Cardiac septum (tissue), 1 donor: ENCODE measurements at regions of chr15 and their contacts with region 1.

Region 1: DNA sequence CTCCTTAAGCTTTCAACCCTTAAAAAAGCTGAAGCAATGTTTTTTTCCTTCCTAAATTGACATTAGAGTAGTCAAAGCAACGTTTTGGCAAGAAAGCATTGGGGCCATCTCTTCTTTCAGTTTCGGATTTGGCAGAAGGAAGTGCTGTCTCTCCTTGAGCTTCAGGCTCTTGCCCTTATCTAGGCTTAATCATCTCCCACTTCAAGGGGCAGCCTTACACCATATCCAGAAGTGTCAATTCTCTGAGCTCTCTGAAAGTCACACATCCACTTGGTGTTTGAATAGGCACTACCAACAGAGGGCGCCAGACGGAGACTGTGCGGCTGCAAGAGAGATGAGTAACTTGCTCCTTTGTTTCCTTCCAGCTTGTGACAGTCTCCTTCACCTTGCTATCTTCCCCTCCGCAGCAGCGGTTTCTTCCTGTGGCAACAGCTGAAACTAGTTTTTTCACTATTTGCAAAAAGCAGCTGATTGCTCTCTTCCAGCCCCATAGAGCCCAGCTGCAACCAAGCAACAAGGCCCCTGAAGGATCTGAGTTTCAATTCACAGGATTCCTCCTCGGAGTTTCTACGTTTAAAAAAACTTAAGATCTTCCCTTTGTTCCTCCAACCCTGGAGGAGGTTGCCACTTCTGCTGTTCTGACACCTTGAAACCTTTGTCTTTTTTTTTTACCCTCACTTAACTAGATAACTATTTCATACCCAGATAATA is 147.0 kb upstream of the SLCO3A1 start:
- DNase-seq: peak; percentile 91

Region 2: GRCh38 chr15:91535856-91536500 is 170.5 kb before region 1 on chr15:
- intact Hi-C with region 1: loop called (anchors 10 kb)
- DNase-seq: no peak

Region 3: GRCh38 chr15:91790836-91791235 is 84.4 kb after region 1 on chr15:
- intact Hi-C with region 1: no loop called
- DNase-seq: no peak

Region 4: DNA sequence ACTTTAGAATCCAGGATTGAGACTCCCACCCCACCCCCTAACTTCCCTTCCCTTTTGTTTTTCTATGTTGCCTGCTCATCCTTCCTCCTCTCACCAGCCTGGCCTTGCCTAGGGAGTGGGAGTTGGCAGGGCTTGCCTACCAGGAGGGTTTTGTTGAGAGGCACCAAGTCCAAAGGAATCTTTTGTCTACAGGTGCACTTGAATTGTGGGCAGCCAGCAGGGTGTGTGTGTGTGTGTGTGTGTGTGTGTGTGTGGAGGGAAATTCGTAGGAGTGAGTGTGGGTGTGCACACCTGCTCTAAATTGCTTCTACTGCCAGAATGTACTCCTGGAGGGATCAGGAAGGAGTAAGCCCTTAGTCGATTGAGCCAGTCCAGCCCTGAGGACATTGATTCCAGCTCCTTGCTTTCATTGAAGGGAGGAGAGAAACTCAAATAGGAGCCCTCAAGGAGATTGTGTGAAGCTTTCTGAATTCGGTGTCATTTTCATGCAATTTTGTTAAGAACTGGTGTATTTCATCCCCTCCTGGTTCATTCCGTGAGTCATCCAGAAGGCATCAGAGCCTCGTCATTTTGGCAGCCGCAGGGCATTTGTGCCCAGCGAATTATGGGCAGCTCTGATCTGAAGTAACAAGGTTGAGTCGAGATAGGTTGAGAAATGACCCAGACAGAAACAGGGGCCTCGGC is 259.2 kb after region 1 on chr15:
- intact Hi-C with region 1: loop called (anchors 10 kb)
- DNase-seq: no peak

Region 5: GRCh38 chr15:92074646-92075045 is 368.2 kb after region 1 on chr15:
- intact Hi-C with region 1: no loop called
- DNase-seq: no peak